Activated CD8-positive, alpha-beta T cell treated with anti-CD3 and anti-CD28 coated beads for 36 hours (primary cell): ENCODE measurements at regions of chr14 and their contacts with region 1.

Region 1: DNA sequence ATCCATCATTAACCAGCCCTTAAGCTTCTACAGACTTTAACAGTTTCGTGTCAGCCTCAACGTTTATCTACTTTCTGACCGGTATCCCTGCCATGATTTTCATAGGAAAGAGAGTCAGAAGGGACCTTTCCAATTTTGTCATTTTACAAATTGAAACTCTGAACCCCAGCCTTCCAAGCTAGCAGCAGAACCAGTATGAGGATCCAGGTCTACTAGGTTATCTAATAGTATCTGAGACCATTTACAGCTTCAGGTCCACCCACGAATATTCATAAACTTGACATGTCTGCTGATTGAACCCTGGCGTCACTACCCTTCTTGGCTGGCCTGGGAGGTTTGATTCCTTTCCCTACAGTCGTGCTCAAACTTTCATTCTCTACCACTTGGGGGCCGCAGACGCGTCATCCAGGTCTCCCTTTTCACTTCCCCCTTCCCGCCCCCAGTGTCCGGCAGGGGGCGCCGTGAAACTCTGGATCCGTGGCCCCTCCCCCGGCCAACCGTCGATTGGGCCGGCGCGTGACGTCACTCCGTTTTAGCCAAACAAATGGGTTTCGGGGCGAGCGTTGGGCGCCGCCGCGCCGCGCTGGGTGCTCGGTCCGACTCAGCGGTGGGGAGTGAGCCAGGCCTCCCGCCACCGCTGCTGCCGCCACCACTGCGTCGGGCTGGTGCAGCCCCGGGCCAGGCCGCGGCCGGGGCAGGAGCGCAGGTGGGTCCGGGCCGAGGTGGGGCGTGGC is at the start of gene FBXO34:
- DNase-seq: peak; percentile 100
- ATAC-seq: peak; percentile 91
- H3K4me3 Mint-ChIP-seq: peak within 1 kb of the TSS; percentile 87
- H3K27ac Mint-ChIP-seq: peak within 1 kb of the TSS; percentile 92
- H3K4me1 Mint-ChIP-seq: peaks cover 38% of the 10 kb centered on the region
- H3K27me3 Mint-ChIP-seq: no peaks in the 10 kb centered on the region
- CTCF ChIP-seq: peak; percentile 89
- total RNA-seq, gene FBXO34: 17.7 to 20.0 TPM

Region 2: DNA sequence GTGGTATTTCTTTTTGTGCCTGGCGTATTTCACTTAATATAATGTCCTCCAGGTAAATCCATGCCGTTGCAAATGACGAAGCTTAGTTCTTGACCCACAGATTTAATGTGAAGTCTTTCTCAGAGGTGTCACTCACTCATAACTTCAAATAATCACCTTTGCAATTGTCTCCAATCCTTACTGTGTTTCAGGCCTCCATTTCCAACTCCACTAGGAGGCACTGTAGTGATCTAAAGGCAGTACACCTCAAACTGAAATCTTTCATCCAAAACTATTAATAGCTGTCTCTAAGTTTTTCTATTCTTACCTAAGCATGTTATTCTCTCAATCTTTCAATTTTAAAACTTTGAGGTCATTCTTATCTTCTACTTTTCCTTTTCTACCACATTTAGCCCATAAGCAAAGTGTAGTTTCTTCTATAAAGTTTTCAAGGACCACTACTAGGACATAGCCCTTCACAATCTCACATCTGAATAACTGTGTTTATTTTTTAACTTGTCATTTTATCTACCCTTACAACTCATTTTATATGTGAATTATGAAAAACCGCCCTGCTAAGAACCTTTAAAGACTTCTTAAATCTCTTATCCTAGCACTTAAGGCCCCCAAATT is 25.2 kb before region 1 on chr14:
- CTCF ChIA-PET with region 1: interaction called, 16 read pairs
- POLR2A ChIA-PET with region 1: no interaction called
- intact Hi-C with region 1: no loop called
- DNase-seq: peak; percentile 47
- ATAC-seq: peak; percentile 34
- H3K4me3 Mint-ChIP-seq: no peak overlapping the region
- H3K27ac Mint-ChIP-seq: no peak overlapping the region
- H3K4me1 Mint-ChIP-seq: no peaks in the 10 kb centered on the region
- H3K27me3 Mint-ChIP-seq: peaks cover 9% of the 10 kb centered on the region
- CTCF ChIP-seq: peak; percentile 64

Region 3: DNA sequence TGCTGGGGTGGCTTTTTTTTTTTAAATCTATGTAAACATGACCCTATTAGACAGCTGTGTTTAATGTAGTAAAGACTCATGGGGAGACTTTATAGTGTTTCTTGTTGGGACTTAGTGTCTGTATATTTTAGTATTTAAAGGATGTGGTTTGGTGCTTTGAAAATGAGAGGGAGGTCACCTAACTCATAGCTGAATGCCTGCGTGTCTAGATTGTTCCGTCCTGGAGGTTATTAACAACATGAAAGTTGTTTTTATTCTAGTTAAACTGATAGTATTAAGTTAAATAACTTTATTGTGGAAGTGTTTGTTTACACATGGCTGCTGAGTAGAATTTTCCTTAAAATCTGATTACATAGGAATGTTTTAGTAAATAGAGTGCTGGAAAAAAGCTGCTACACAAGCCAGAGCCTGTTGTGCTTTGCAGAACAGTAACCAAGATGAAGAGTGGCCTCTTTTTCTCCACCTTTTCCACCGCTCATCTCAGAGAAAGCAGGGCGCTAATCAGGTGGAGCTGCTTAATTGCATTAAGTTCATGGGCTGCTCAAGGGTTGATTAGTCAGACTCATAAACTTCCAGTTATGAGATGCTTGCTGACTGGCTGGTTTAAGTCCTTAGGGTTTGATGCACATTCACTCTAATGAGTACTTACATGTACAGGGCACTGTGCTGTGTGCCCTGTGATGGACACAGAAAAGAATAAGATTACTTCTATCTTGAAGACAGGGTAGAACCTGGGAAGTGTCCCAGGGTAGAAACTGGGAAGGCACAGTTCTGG is 62.9 kb after region 1 on chr14:
- CTCF ChIA-PET with region 1: interaction called, 10 read pairs
- POLR2A ChIA-PET with region 1: interaction called, 4 read pairs
- intact Hi-C with region 1: loop called (anchors 5 kb)
- DNase-seq: peak; percentile 35
- ATAC-seq: peak; percentile 48
- H3K4me3 Mint-ChIP-seq: peak overlapping the region; percentile 38
- H3K27ac Mint-ChIP-seq: peak overlapping the region; percentile 87
- H3K4me1 Mint-ChIP-seq: peaks cover 79% of the 10 kb centered on the region
- H3K27me3 Mint-ChIP-seq: no peaks in the 10 kb centered on the region
- CTCF ChIP-seq: no peak

Region 4: GRCh38 chr14:55348766-55349453 is 77.9 kb after region 1 on chr14:
- CTCF ChIA-PET with region 1: interaction called, 87 read pairs
- POLR2A ChIA-PET with region 1: interaction called, 5 read pairs
- intact Hi-C with region 1: loop called (anchors 2 kb)
- DNase-seq: no peak
- ATAC-seq: no peak
- H3K4me3 Mint-ChIP-seq: no peak overlapping the region
- H3K27ac Mint-ChIP-seq: peak overlapping the region; percentile 11
- H3K4me1 Mint-ChIP-seq: peaks cover 51% of the 10 kb centered on the region
- H3K27me3 Mint-ChIP-seq: no peaks in the 10 kb centered on the region
- CTCF ChIP-seq: no peak

Region 5: GRCh38 chr14:55373784-55374705 is 103.0 kb after region 1 on chr14:
- CTCF ChIA-PET with region 1: interaction called, 12 read pairs
- POLR2A ChIA-PET with region 1: interaction called, 3 read pairs
- intact Hi-C with region 1: no loop called
- DNase-seq: peak; percentile 55
- ATAC-seq: peak; percentile 84
- H3K4me3 Mint-ChIP-seq: peak overlapping the region; percentile 58
- H3K27ac Mint-ChIP-seq: peak overlapping the region; percentile 98
- H3K4me1 Mint-ChIP-seq: peaks cover 46% of the 10 kb centered on the region
- H3K27me3 Mint-ChIP-seq: no peaks in the 10 kb centered on the region
- CTCF ChIP-seq: no peak

Region 6: GRCh38 chr14:55430024-55430690 is 159.2 kb after region 1 on chr14:
- CTCF ChIA-PET with region 1: interaction called, 12 read pairs
- POLR2A ChIA-PET with region 1: no interaction called
- intact Hi-C with region 1: loop called (anchors 1 kb)
- DNase-seq: peak; percentile 65
- ATAC-seq: peak; percentile 92
- H3K4me3 Mint-ChIP-seq: no peak overlapping the region
- H3K27ac Mint-ChIP-seq: peak overlapping the region; percentile 51
- H3K4me1 Mint-ChIP-seq: peaks cover 23% of the 10 kb centered on the region
- H3K27me3 Mint-ChIP-seq: no peaks in the 10 kb centered on the region
- CTCF ChIP-seq: peak; percentile 76

Region 7: GRCh38 chr14:55579724-55580469 is 308.9 kb after region 1 on chr14 and contains the start of gene KTN1:
- CTCF ChIA-PET with region 1: no interaction called
- POLR2A ChIA-PET with region 1: no interaction called
- intact Hi-C with region 1: loop called (anchors 10 kb)
- DNase-seq: peak; percentile 87
- ATAC-seq: peak; percentile 91
- H3K4me3 Mint-ChIP-seq: peak within 1 kb of the TSS; percentile 91
- H3K27ac Mint-ChIP-seq: peak within 1 kb of the TSS; percentile 93
- H3K4me1 Mint-ChIP-seq: peaks cover 22% of the 10 kb centered on the region
- H3K27me3 Mint-ChIP-seq: no peaks in the 10 kb centered on the region
- CTCF ChIP-seq: no peak
- total RNA-seq, gene KTN1: 107 to 113 TPM